Heart left ventricle (tissue), 16 donors: ENCODE measurements at regions of chr17 and their contacts with region 1.

Region 1: GRCh38 chr17:46865100-46865499 is 13.7 kb downstream of the WNT9B start:
- DNase-seq: no peak
- ATAC-seq: no peak
- H3K4me3 ChIP-seq: no peak overlapping the region
- H3K27ac ChIP-seq: no peak overlapping the region
- H3K4me1 ChIP-seq: no peaks in the 10 kb centered on the region
- H3K27me3 ChIP-seq: peaks cover 0 to 30% (median 0%) of the 10 kb centered on the region in 9 donors
- CTCF ChIP-seq: no peak
- POLR2A ChIP-seq: no peak

Region 2: DNA sequence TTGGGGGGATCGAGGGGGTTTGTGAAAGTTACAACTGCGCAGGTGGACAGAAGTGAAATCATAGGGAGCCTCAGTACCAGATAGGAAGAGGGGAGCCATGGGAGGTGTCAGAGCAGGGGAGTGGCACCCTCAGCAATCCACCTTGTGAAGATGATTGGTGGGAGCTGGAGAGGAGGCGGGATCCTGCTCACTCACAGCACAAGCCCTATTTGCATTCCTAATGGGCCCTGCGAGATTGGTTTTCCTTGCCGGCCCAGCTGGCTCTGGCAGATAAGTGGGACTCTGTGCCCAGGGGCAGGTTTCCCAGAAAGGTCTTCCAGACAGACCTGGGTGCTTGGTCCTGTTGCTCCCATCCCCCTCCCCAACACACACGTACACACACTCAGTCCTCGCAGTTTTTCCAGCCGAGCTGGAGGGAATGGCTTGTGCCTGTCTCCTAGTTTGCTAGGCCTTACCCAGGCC is 56.0 kb before region 1 on chr17:
- intact Hi-C with region 1: loop called in 2 of 10 experiments (anchors 10 kb)
- DNase-seq: no peak
- ATAC-seq: no peak
- H3K4me3 ChIP-seq: no peak overlapping the region
- H3K27ac ChIP-seq: no peak overlapping the region
- H3K4me1 ChIP-seq: no peaks in the 10 kb centered on the region
- H3K27me3 ChIP-seq: peaks cover 0 to 32% (median 5%) of the 10 kb centered on the region in 9 donors
- CTCF ChIP-seq: no peak
- POLR2A ChIP-seq: no peak

Region 3: GRCh38 chr17:46910179-46910927 is 45.3 kb after region 1 on chr17:
- intact Hi-C with region 1: loop called in 1 of 10 experiments (anchors 5 kb)
- DNase-seq: no peak
- ATAC-seq: no peak
- H3K4me3 ChIP-seq: no peak overlapping the region
- H3K27ac ChIP-seq: no peak overlapping the region
- H3K4me1 ChIP-seq: peaks cover 0 to 15% (median 6%) of the 10 kb centered on the region in 12 donors
- H3K27me3 ChIP-seq: no peaks in the 10 kb centered on the region
- CTCF ChIP-seq: no peak
- POLR2A ChIP-seq: no peak

Region 4: GRCh38 chr17:46940621-46941404 is 75.7 kb after region 1 on chr17:
- intact Hi-C with region 1: no loop called
- DNase-seq: peak; percentile 72 to 79 (median 76)
- ATAC-seq: peak; percentile 70 to 84 (median 82)
- H3K4me3 ChIP-seq: no peak overlapping the region
- H3K27ac ChIP-seq: no peak overlapping the region
- H3K4me1 ChIP-seq: peaks cover 4 to 27% (median 20%) of the 10 kb centered on the region in 12 donors
- H3K27me3 ChIP-seq: no peaks in the 10 kb centered on the region
- CTCF ChIP-seq: peak; percentile 75 to 87 (median 83)
- POLR2A ChIP-seq: no peak